H1 (cell line): ENCODE measurements at regions of chr16 and their contacts with region 1.

Region 1: DNA sequence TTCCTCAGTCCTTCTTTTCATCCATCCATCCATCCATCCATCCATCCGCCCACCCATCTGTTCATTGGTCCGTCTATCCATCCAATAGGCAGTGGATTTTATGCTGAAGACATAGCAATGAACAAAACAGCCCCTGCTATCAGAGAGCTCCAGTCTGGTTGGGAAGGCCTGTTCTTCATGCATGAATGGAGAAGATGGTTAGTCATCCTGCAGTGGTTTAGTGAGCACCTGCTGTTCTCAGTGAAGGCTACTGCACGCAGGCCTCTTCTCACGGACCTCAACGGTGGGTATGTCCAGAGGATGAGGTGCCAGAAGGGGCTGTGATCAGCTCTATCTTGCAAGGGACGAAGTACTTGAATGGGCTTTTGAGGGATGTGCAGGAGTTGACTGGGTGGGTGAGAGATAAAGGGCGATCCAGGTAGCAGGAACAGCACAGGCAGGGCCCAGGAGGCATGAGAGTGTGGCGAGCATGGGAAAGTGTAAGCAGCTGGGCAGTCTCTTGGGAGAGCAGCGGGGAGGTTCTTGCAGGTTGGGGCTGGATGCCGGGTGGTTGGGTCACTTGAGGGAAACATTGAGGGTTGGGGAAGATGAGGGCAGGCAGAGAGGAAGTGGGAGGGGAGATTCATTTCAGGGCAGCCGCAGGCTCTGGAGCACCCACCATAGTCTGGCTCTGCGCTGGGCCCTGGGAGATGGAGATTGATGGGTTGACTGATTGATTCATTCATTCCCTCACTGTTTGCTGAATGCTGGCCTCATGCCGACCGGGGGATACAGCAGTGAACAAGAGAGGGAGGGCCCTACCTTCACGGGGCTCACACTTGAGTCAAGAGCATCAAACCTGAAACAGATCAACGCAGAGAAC is 115.0 kb upstream of the CIBAR2 start:
- DNase-seq: no peak
- H3K4me3 ChIP-seq: no peak overlapping the region
- H3K27ac ChIP-seq: no peak overlapping the region
- H3K4me1 ChIP-seq: peaks cover 0 to 21% (median 9%) of the 10 kb centered on the region in 4 experiments; a peak in 6 of 7 replicates
- H3K27me3 ChIP-seq: no peaks in the 10 kb centered on the region
- CTCF ChIP-seq: no peak
- EP300 ChIP-seq: no peak
- POLR2A ChIP-seq: no peak
- RAD21 ChIP-seq: no peak

Region 2: DNA sequence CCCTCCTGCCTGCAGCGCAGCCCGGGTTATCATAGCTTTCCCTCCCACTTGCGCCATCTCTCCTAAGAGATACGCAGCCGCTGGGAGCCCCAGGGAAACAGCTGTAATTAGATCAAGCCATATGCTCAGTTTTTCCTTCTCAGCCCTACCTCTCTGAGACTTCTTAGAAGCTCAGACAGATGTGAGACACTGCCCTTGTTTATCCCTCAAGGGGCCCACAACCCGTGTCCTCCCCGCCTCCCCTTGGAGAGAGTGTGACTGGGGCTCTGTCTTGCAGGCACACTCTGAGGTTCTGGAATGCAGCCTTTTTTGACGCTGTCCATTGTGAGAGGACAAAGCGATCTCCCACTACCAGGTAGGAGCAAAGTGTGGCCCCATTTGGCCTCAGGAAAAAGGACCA is 146.3 kb before region 1 on chr16:
- CTCF ChIA-PET with region 1: no interaction called
- POLR2A ChIA-PET with region 1: no interaction called
- DNase-seq: no peak
- H3K4me3 ChIP-seq: no peak overlapping the region
- H3K27ac ChIP-seq: no peak overlapping the region
- H3K4me1 ChIP-seq: peaks cover 12 to 40% (median 26%) of the 10 kb centered on the region in 4 experiments
- H3K27me3 ChIP-seq: peaks cover 8 to 61% (median 46%) of the 10 kb centered on the region in 4 experiments
- CTCF ChIP-seq: no peak
- EP300 ChIP-seq: no peak
- POLR2A ChIP-seq: no peak
- RAD21 ChIP-seq: no peak

Region 3: GRCh38 chr16:85172455-85173145 is 54.7 kb before region 1 on chr16:
- CTCF ChIA-PET with region 1: interaction called, 13 read pairs
- POLR2A ChIA-PET with region 1: no interaction called
- DNase-seq: peak in 1 of 2 experiments; percentile 70
- H3K4me3 ChIP-seq: peak overlapping the region in 2 of 4 experiments; percentile 14; a peak in 1 of 8 replicates
- H3K27ac ChIP-seq: no peak overlapping the region
- H3K4me1 ChIP-seq: peaks cover 6 to 41% (median 18%) of the 10 kb centered on the region in 4 experiments
- H3K27me3 ChIP-seq: peaks cover 1 to 22% (median 15%) of the 10 kb centered on the region in 4 experiments; a peak in 6 of 7 replicates
- CTCF ChIP-seq: peak; percentile 66 to 89 (median 69)
- EP300 ChIP-seq: no peak
- POLR2A ChIP-seq: no peak
- RAD21 ChIP-seq: peak; percentile 23 to 45; a peak in 2 of 4 replicates

Region 4: DNA sequence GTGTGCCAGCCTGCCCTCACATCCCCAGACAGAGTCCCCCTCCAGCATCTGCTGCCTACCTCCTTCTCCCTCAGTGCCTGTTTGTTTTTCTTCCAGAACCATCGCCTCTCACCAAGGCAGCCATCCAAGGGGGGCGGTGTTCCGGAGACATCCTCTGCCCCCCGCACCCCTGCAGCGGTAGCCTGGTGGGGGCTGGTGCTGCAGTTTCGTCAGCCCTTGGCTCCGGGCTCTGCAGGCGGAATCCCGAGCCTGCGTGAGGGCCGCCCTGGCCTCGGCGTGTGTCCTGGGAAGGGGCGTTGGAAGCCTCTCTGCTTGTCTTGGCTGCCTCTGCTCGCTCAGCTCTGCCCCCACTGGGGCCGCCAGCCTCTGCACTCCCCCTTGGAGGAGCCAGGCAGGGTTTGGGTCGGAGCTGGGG is 10.9 kb after region 1 on chr16:
- CTCF ChIA-PET with region 1: interaction called, 371 read pairs
- POLR2A ChIA-PET with region 1: interaction called, 5 read pairs
- DNase-seq: peak in 1 of 2 experiments; percentile 79
- H3K4me3 ChIP-seq: no peak overlapping the region
- H3K27ac ChIP-seq: no peak overlapping the region
- H3K4me1 ChIP-seq: peaks cover 4 to 41% (median 27%) of the 10 kb centered on the region in 4 experiments
- H3K27me3 ChIP-seq: no peaks in the 10 kb centered on the region; a peak in 2 of 7 replicates
- CTCF ChIP-seq: peak; percentile 50 to 59 (median 58)
- EP300 ChIP-seq: no peak
- POLR2A ChIP-seq: no peak
- RAD21 ChIP-seq: peak; percentile 39 to 48; a peak in 3 of 4 replicates

Region 5: DNA sequence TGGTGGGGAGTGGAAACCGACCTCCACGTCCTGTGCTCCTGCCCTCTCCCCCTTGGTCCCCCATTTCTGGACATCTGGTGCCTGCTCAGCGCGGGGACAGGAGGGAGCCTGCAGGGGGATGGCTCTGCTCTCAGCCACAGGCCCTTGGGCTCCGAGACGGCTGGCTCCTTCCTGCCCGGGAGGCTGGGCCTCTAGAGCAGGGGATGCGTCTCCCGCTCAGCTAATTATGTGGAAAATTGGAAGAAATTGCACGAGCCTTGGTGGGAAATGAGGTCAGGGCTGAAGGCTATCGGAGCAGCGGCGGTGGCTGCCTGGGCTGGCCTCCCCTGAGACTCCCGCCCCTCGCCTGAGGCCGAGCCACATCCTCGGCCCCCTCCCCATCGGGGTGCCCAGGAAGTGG is 39.5 kb after region 1 on chr16:
- CTCF ChIA-PET with region 1: no interaction called
- POLR2A ChIA-PET with region 1: no interaction called
- DNase-seq: no peak
- H3K4me3 ChIP-seq: no peak overlapping the region
- H3K27ac ChIP-seq: no peak overlapping the region
- H3K4me1 ChIP-seq: peaks cover 0 to 3% (median 0%) of the 10 kb centered on the region in 4 experiments; a peak in 3 of 7 replicates
- H3K27me3 ChIP-seq: peaks cover 0 to 3% (median 0%) of the 10 kb centered on the region in 4 experiments; a peak in 2 of 7 replicates
- CTCF ChIP-seq: no peak
- EP300 ChIP-seq: no peak
- POLR2A ChIP-seq: no peak
- RAD21 ChIP-seq: no peak

Region 6: GRCh38 chr16:85286970-85287824 is 59.9 kb after region 1 on chr16:
- CTCF ChIA-PET with region 1: no interaction called
- POLR2A ChIA-PET with region 1: no interaction called
- DNase-seq: no peak
- H3K4me3 ChIP-seq: no peak overlapping the region
- H3K27ac ChIP-seq: no peak overlapping the region
- H3K4me1 ChIP-seq: peaks cover 0 to 12% (median 2%) of the 10 kb centered on the region in 4 experiments; a peak in 5 of 7 replicates
- H3K27me3 ChIP-seq: no peaks in the 10 kb centered on the region
- CTCF ChIP-seq: peak in 1 of 3 experiments; percentile 3; a peak in 1 of 4 replicates
- EP300 ChIP-seq: no peak
- POLR2A ChIP-seq: no peak
- RAD21 ChIP-seq: no peak

Region 7: GRCh38 chr16:85316321-85316919 is 89.1 kb after region 1 on chr16:
- CTCF ChIA-PET with region 1: no interaction called
- POLR2A ChIA-PET with region 1: no interaction called
- DNase-seq: peak in 1 of 2 experiments; percentile 86
- H3K4me3 ChIP-seq: no peak overlapping the region
- H3K27ac ChIP-seq: no peak overlapping the region
- H3K4me1 ChIP-seq: peaks cover 4 to 35% (median 23%) of the 10 kb centered on the region in 4 experiments
- H3K27me3 ChIP-seq: no peaks in the 10 kb centered on the region
- CTCF ChIP-seq: peak; percentile 85 to 98 (median 97)
- EP300 ChIP-seq: no peak
- POLR2A ChIP-seq: no peak
- RAD21 ChIP-seq: peak; percentile 70 to 81